ENCODE measurements at regions of chr1 and their contacts with region 1.

Region 1: DNA sequence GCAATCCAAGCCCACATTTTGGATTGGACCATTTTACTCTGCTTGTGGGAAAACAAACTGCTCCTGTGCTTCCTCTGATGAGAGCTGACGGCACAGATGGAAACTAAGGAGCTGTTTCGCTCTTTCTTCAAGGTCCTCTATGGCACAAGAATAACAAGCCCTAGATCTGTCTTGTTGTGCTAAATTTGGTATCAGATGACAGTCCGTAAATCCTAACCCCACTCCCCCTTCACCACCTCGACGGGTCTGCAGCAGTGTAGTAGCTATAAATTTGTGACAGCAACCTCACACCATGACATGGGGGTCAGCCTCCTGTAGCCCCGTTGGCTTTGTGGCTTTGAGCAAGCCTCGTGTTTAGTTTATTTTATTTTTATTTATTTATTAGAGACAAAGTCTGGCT is 85.9 kb downstream of the ADSS2 start:
- DNase-seq: no peak
- ATAC-seq: no peak
- H3K4me3 ChIP-seq: no peak overlapping the region
- H3K27ac ChIP-seq: no peak overlapping the region
- H3K4me1 ChIP-seq: peaks cover 26 to 43% of the 10 kb centered on the region in 2 experiments
- H3K27me3 ChIP-seq: no peaks in the 10 kb centered on the region
- CTCF ChIP-seq: no peak
- EP300 ChIP-seq: no peak
- POLR2A ChIP-seq: no peak
- RAD21 ChIP-seq: no peak

Region 2: DNA sequence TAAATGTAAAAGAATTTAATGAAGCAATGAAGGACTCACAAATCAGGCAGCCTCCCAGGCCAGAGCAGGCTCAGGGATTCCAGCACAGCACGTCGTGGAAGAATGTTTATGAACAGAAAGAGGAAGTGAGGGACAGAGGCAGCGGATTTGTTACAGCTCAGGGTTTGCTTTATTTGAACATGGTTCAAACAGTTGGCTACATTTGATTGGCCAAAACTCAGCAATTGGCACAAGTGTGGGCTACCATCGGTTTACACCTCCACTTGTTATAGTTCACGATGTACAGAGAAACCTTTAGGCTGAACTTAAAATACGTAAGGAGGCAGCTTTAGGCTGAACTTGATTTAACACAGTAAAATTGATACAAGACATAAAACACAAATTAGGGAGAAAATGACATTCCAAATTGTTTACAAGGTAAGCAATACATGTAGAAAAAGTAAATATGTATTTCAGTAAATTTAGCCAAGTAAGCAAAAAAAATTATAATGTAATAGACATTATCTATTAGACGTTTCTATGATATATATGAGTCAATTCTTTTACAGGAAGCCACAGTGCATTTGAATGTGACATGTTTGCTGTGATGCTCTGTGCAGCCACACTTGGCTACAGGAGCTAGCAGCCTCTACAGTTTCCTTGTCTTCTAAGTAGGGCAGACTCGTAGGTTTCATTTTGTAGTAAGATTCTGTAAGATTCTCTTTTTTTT is 40.6 kb before region 1 on chr1:
- CTCF ChIA-PET with region 1: no interaction called
- POLR2A ChIA-PET with region 1: interaction called, 4 read pairs
- in situ Hi-C with region 1: no loop called
- intact Hi-C with region 1: loop called (anchors 2 kb)
- DNase-seq: peak in 1 of 4 experiments; percentile 69
- ATAC-seq: peak; percentile 74
- H3K4me3 ChIP-seq: no peak overlapping the region
- H3K27ac ChIP-seq: peak overlapping the region; percentile 42
- H3K4me1 ChIP-seq: peaks cover 3 to 41% of the 10 kb centered on the region in 2 experiments; a peak in 4 of 5 replicates
- H3K27me3 ChIP-seq: no peaks in the 10 kb centered on the region
- CTCF ChIP-seq: no peak
- EP300 ChIP-seq: no peak
- POLR2A ChIP-seq: no peak
- RAD21 ChIP-seq: no peak

Region 3: DNA sequence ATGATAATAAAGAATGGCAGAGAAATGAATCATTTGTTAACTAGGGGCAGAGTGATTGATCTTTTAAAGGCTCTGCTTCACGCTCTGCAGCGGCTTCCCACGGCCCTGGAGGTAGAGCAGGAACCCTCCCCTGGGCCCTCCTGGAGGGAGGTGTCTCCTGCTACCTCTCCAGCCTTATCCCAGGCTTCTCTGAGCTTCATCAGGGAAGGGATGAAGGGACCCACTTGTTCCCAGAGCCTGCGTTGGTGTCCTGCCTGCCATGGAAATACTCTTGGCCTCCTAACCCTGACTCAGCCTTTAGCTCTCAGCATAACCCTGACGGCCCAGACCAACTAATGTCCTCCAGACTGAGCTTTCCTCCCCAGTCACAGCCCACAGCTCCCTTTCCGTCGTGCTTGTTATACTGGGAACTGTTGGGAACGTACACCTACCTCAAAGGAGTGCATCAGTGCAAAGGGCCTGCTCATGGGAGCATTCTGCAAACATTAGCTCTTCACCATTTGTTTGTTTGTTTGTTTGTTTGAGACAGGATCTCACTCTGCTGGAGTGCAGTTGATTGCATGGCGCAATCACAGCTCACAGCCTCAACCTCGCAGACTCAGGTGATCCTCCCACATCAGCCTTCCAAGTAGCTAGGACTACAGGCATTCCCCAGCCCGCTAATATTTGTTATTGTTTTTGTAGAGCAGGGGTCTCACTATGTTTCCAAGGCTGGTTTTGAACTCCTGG is 515.9 kb after region 1 on chr1:
- CTCF ChIA-PET with region 1: no interaction called
- POLR2A ChIA-PET with region 1: no interaction called
- in situ Hi-C with region 1: no loop called
- intact Hi-C with region 1: no loop called
- DNase-seq: no peak
- ATAC-seq: peak; percentile 65
- H3K4me3 ChIP-seq: no peak overlapping the region
- H3K27ac ChIP-seq: no peak overlapping the region
- H3K4me1 ChIP-seq: no peaks in the 10 kb centered on the region; a peak in 1 of 5 replicates
- H3K27me3 ChIP-seq: no peaks in the 10 kb centered on the region
- CTCF ChIP-seq: no peak
- EP300 ChIP-seq: no peak
- POLR2A ChIP-seq: no peak
- RAD21 ChIP-seq: no peak

Measured in K562 (cell line).